B cell (primary cell): ENCODE measurements at regions of chr7 and their contacts with region 1.

Region 1: GRCh38 chr7:100148559-100149350 is at the start of gene LAMTOR4:
- DNase-seq: peak; percentile 99
- ATAC-seq: peak; percentile 97
- H3K4me3 ChIP-seq: peak within 1 kb of the TSS; percentile 65 to 98 (median 75)
- H3K4me3 Mint-ChIP-seq: peak within 1 kb of the TSS; percentile 88
- H3K27ac ChIP-seq: peak within 1 kb of the TSS; percentile 82 to 97
- H3K27ac Mint-ChIP-seq: peak within 1 kb of the TSS; percentile 95
- H3K4me1 ChIP-seq: peaks cover 31 to 43% of the 10 kb centered on the region in 2 donors
- H3K4me1 Mint-ChIP-seq: peaks cover 34% of the 10 kb centered on the region
- H3K27me3 ChIP-seq: no peaks in the 10 kb centered on the region
- H3K27me3 Mint-ChIP-seq: no peaks in the 10 kb centered on the region
- CTCF ChIP-seq: no peak
- total RNA-seq, gene LAMTOR4: 214 TPM in 2 replicates

Region 2: DNA sequence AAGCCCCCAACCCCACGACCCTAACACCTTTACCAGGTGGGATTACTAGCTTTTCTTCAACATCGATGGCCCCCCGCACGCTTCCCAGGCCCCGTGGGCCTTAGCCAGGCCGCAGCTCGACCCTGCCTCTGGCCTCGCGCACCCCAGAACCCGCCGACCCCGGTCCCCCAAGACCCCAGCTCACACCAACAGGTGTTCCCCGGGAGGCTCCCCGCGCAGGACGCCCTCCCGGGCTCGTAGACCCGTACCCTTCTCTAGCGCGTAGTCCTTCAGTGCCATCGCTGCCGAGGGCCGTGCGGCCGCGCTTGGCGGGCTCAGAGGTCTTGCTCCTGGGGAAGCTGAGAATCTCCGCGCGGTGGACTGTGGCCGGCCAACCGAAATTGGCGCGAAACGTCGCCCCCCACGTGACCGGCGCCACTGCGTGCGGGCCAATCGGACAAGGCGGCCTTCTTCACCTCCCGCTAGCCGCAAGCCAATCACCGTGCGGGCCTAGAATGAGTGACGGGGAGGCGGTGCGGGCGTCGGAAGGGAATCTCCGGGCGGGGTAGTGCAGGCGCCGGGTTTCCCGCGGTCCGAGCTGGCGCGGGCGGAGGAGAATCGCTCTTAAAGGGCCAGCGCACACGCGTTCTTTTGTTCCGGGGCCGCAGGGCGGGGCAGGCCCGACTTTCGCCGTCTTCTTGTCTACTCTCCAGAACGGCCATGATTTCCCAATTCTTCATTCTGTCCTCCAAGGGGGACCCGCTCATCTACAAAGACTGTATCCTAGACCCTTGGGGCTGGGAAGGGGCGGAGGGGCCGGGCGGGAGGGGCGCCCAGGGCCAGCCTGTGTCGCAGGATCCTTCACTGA is 47.5 kb before region 1 on chr7 and contains the starts of genes AP4M1 and MCM7:
- CTCF ChIA-PET with region 1: interaction called, 3 read pairs
- POLR2A ChIA-PET with region 1: interaction called, 4 read pairs
- intact Hi-C with region 1: loop called (anchors 1 kb)
- DNase-seq: peak; percentile 97
- ATAC-seq: peak; percentile 86
- H3K4me3 ChIP-seq: peak within 1 kb of the TSS; percentile 85 to 92 (median 90)
- H3K4me3 Mint-ChIP-seq: peak within 1 kb of the TSS; percentile 96
- H3K27ac ChIP-seq: peak within 1 kb of the TSS; percentile 60 to 94
- H3K27ac Mint-ChIP-seq: peak within 1 kb of the TSS; percentile 98
- H3K4me1 ChIP-seq: peaks cover 13 to 24% of the 10 kb centered on the region in 2 donors
- H3K4me1 Mint-ChIP-seq: peaks cover 40% of the 10 kb centered on the region
- H3K27me3 ChIP-seq: no peaks in the 10 kb centered on the region
- H3K27me3 Mint-ChIP-seq: no peaks in the 10 kb centered on the region
- CTCF ChIP-seq: no peak
- total RNA-seq, gene AP4M1: 17.6 and 18.3 TPM in 2 replicates
- total RNA-seq, gene MCM7: 147 and 154 TPM in 2 replicates

Region 3: GRCh38 chr7:100126931-100127865 is 21.6 kb before region 1 on chr7 and contains the start of gene MBLAC1:
- CTCF ChIA-PET with region 1: interaction called, 27 read pairs
- POLR2A ChIA-PET with region 1: interaction called, 7 read pairs
- intact Hi-C with region 1: loop called (anchors 1 kb)
- DNase-seq: peak; percentile 97
- ATAC-seq: peak; percentile 83
- H3K4me3 ChIP-seq: peak within 1 kb of the TSS; percentile 54 to 84 (median 78)
- H3K4me3 Mint-ChIP-seq: peak within 1 kb of the TSS; percentile 100
- H3K27ac ChIP-seq: peak within 1 kb of the TSS; percentile 83 to 95
- H3K27ac Mint-ChIP-seq: peak within 1 kb of the TSS; percentile 100
- H3K4me1 ChIP-seq: peaks cover 20 to 36% of the 10 kb centered on the region in 2 donors
- H3K4me1 Mint-ChIP-seq: peaks cover 31% of the 10 kb centered on the region
- H3K27me3 ChIP-seq: no peaks in the 10 kb centered on the region
- H3K27me3 Mint-ChIP-seq: no peaks in the 10 kb centered on the region
- CTCF ChIP-seq: no peak
- total RNA-seq, gene MBLAC1: 4.5 TPM in 2 replicates

Region 4: DNA sequence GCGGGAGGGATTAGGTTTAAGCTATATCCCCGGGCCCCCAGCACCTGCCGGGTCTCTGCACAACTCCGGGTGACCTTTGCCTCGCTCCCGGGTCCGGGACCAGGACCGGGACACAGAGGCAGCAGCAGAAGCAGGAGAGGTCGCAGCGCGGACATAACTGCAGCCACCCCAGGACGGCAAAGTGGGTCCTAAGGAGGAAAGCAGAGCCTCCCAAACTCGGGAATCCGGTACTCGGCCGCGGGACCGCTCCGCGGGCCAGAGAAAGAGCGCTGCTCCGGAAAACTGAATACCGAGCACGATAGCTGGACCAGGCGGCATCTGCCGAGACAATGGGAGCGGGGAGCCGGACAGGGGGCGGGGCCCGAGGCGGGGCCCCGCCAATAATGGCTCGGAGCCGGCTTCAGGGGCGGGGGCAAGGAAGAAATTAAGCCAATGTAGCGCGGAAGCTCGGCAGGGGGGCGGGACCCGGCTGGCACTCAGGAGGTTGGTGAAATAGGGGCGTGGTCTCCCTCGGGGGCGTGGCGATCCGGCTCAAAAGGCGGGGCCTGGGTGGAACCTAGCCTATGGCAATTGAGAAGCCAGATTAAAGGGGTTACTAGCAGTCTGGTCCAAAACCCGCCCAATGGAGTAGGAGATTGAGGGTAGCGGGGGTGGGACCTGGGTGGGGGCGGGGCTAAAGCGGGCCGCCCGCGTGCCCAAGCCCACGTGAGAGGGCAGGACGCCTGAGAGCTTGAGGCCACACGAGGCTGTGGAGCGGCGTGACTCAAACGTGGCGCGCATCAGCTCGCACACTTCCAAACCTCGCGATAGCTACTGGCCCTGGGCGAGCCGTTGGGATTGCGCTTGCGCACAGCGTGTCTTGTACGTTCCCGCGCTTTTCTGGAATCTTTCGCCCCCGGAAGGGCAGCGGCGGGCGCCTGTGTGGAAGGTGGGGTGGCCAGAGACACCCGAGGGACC is 28.6 kb after region 1 on chr7 and contains the starts of genes GPC2 and STAG3:
- CTCF ChIA-PET with region 1: interaction called, 3 read pairs
- POLR2A ChIA-PET with region 1: interaction called, 8 read pairs
- intact Hi-C with region 1: loop called (anchors 1 kb)
- DNase-seq: peak; percentile 97
- ATAC-seq: peak; percentile 94
- H3K4me3 ChIP-seq: peak within 1 kb of the TSS; percentile 64 to 78 (median 70)
- H3K4me3 Mint-ChIP-seq: peak within 1 kb of the TSS; percentile 73
- H3K27ac ChIP-seq: peak within 1 kb of the TSS in 1 of 2 donors; percentile 39
- H3K27ac Mint-ChIP-seq: peak within 1 kb of the TSS; percentile 27
- H3K4me1 ChIP-seq: peaks cover 11 to 22% of the 10 kb centered on the region in 2 donors
- H3K4me1 Mint-ChIP-seq: peaks cover 26% of the 10 kb centered on the region
- H3K27me3 ChIP-seq: no peaks in the 10 kb centered on the region
- H3K27me3 Mint-ChIP-seq: no peaks in the 10 kb centered on the region
- CTCF ChIP-seq: no peak
- total RNA-seq, gene GPC2: 4.1 and 6.1 TPM in 2 replicates
- total RNA-seq, gene STAG3: 22.0 and 24.8 TPM in 2 replicates

Region 5: DNA sequence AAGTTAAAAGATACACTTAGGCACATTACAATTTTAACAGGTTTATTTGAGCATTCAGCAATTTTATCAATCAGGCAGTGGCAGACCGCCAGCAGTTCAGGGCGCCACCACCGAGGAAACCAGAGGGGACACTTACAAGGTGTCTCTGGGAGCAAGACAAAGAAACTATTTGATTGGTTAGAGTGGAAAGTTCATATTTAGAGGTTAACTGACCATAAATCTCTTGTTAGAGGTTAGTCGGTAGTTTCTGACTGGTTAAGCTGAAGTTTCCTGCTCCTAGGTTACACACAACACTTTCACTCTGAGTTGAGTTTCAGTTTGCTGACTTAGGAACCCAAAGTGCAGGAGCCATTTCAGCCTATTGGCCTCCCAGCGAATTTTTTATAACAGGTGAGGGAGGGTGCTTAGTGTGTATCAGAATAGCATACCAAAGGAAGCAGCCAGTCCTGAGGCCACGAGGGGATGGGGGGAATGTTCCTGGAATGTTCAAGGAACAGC is 60.2 kb after region 1 on chr7:
- CTCF ChIA-PET with region 1: interaction called, 3 read pairs
- POLR2A ChIA-PET with region 1: interaction called, 3 read pairs
- intact Hi-C with region 1: loop called (anchors 5 kb)
- DNase-seq: peak; percentile 30
- ATAC-seq: no peak
- H3K4me3 ChIP-seq: peak overlapping the region in 1 of 5 experiments; percentile 10
- H3K4me3 Mint-ChIP-seq: peak overlapping the region; percentile 46
- H3K27ac ChIP-seq: no peak overlapping the region
- H3K27ac Mint-ChIP-seq: peak overlapping the region; percentile 85
- H3K4me1 ChIP-seq: peaks cover 42 to 50% of the 10 kb centered on the region in 2 donors
- H3K4me1 Mint-ChIP-seq: peaks cover 64% of the 10 kb centered on the region
- H3K27me3 ChIP-seq: no peaks in the 10 kb centered on the region
- H3K27me3 Mint-ChIP-seq: no peaks in the 10 kb centered on the region
- CTCF ChIP-seq: no peak

Region 6: DNA sequence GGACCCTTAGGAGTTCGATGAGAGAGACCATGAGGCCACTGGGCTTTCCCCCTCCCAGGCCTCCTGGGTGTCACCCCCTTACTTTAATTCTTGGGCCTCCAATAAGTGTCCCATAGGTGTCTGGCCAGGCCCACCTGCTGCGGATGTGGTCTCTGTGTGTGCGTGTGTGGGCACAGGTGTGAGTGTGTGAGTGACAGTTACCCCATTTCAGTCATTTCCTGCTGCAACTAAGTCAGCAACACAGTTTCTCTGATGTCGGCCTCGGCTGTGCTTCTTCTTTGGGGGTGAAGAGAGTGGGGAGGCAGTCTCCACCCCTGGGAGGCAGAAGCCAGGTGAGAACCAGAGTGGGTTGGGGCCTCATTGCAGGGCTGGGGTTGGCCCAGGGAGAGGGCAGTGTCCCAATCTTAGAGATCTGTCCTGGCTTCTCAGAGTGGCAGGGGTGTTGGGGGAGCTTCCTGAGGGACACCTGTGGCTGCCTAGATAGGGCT is 72.5 kb after region 1 on chr7:
- CTCF ChIA-PET with region 1: interaction called, 7 read pairs
- POLR2A ChIA-PET with region 1: interaction called, 11 read pairs
- intact Hi-C with region 1: loop called (anchors 2 kb)
- DNase-seq: peak; percentile 84
- ATAC-seq: peak; percentile 56
- H3K4me3 ChIP-seq: peak overlapping the region in 4 of 5 experiments; percentile 53 to 65 (median 64)
- H3K4me3 Mint-ChIP-seq: peak overlapping the region; percentile 85
- H3K27ac ChIP-seq: peak overlapping the region; percentile 97 to 100
- H3K27ac Mint-ChIP-seq: peak overlapping the region; percentile 95
- H3K4me1 ChIP-seq: peaks cover 42 to 54% of the 10 kb centered on the region in 2 donors
- H3K4me1 Mint-ChIP-seq: peaks cover 74% of the 10 kb centered on the region
- H3K27me3 ChIP-seq: no peaks in the 10 kb centered on the region
- H3K27me3 Mint-ChIP-seq: no peaks in the 10 kb centered on the region
- CTCF ChIP-seq: no peak

Region 7: DNA sequence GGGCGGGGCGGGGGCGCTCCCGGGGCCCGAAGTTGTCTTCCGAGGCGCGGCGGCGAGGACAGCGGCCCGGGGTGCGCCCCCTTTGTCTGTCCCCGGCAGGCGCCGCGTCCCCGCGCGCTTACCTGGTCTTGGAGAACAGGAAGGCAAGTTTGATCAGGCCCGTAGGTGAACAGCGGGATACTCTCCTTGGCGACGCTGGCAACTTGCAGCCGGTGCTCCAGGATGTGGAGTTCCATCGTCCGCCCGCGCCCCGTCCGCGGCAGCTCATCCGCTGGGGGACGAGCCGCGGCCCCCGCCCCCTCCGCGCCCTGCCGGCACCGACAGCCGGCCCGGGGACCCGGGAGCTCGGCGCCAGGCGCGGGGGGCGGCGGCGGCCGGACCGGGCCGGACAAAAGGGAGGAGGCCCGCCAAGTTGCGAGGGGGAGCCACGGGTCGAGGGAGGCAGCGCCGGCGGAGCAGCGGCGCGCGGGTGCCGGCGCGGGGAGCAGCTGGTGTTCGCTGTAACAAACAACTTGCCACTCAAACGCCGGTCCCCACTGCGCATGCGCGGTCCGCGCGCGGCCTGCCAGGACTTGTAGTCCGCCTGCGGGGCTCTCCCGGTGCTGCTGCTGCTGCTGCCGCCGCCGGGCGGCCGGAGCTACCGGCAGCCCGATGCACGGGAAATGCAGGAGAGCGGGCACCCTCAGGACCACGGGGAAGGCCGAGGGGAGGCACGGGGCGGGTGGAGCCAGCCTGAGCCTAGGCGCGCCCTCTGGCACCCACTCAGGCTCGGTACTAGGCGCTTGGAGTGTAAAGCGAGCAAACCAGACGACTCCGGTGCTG is 123.2 kb after region 1 on chr7:
- CTCF ChIA-PET with region 1: no interaction called
- POLR2A ChIA-PET with region 1: no interaction called
- intact Hi-C with region 1: loop called (anchors 5 kb)
- DNase-seq: peak; percentile 96
- ATAC-seq: peak; percentile 90
- H3K4me3 ChIP-seq: peak overlapping the region in 4 of 5 experiments; percentile 42 to 63 (median 59)
- H3K4me3 Mint-ChIP-seq: peak overlapping the region; percentile 82
- H3K27ac ChIP-seq: peak overlapping the region in 1 of 2 donors; percentile 46
- H3K27ac Mint-ChIP-seq: peak overlapping the region; percentile 75
- H3K4me1 ChIP-seq: peaks cover 0 to 9% of the 10 kb centered on the region in 2 donors
- H3K4me1 Mint-ChIP-seq: peaks cover 18% of the 10 kb centered on the region
- H3K27me3 ChIP-seq: no peaks in the 10 kb centered on the region
- H3K27me3 Mint-ChIP-seq: no peaks in the 10 kb centered on the region
- CTCF ChIP-seq: peak; percentile 37

Region 8: GRCh38 chr7:100353685-100354330 is 205.1 kb after region 1 on chr7:
- CTCF ChIA-PET with region 1: no interaction called
- POLR2A ChIA-PET with region 1: no interaction called
- intact Hi-C with region 1: no loop called
- DNase-seq: no peak
- ATAC-seq: no peak
- H3K4me3 ChIP-seq: no peak overlapping the region
- H3K4me3 Mint-ChIP-seq: no peak overlapping the region
- H3K27ac ChIP-seq: no peak overlapping the region
- H3K27ac Mint-ChIP-seq: peak overlapping the region; percentile 26
- H3K4me1 ChIP-seq: peaks cover 8 to 30% of the 10 kb centered on the region in 2 donors
- H3K4me1 Mint-ChIP-seq: peaks cover 14% of the 10 kb centered on the region
- H3K27me3 ChIP-seq: no peaks in the 10 kb centered on the region
- H3K27me3 Mint-ChIP-seq: no peaks in the 10 kb centered on the region
- CTCF ChIP-seq: no peak